SK-N-SH (cell line): ENCODE measurements at regions of chr10 and their contacts with region 1.

Region 1: DNA sequence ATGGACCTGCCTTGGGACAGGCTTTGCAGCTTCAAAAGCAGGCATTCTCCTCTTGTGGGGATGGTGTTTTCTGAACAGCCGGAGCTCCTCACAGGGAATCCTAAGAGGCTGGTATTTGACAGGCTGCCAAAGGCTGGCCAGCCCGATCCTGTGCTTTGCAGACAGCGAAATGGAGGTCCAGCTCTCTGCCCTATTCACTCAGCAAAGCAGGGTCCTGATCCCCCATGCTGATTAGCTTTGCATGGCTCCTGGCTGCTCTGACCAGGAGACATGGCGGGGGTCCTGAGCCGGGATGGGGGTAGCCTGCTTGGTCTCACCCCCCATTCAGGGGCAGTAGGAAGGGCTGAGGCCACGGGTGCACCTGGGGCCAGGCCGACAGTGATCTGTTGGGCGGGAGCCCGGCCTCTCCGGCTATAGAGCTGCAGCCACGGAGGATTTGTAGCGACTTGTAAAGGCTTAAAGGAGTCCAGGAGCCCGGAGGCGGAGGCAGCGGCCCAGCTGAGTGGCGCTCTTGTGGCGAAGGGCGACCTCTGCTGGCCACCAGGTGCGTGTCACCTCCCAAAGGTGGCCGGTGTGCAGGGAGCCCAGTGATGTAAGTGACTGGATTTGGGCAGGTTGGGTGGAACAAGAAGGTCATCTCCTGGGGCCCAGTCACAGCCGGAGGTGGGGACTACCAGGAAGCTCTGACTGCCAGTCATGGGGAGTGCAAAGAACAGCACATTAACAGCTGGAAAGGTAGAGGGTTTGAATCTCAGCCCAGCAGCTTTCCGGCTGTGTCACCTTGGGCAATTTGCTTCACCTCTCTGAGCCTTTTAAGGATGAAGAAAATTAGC is 126.5 kb downstream of the ZMIZ1 start:
- DNase-seq: peak; percentile 85
- H3K4me3 ChIP-seq: peak overlapping the region in 1 of 2 experiments; percentile 24; a peak in 1 of 4 replicates
- H3K27ac ChIP-seq: peak overlapping the region; percentile 70 to 93
- H3K4me1 ChIP-seq: peaks cover 25 to 72% of the 10 kb centered on the region in 2 experiments
- H3K27me3 ChIP-seq: no peaks in the 10 kb centered on the region
- CTCF ChIP-seq: peak; percentile 93
- EP300 ChIP-seq: no peak
- RAD21 ChIP-seq: peak; percentile 95

Region 2: DNA sequence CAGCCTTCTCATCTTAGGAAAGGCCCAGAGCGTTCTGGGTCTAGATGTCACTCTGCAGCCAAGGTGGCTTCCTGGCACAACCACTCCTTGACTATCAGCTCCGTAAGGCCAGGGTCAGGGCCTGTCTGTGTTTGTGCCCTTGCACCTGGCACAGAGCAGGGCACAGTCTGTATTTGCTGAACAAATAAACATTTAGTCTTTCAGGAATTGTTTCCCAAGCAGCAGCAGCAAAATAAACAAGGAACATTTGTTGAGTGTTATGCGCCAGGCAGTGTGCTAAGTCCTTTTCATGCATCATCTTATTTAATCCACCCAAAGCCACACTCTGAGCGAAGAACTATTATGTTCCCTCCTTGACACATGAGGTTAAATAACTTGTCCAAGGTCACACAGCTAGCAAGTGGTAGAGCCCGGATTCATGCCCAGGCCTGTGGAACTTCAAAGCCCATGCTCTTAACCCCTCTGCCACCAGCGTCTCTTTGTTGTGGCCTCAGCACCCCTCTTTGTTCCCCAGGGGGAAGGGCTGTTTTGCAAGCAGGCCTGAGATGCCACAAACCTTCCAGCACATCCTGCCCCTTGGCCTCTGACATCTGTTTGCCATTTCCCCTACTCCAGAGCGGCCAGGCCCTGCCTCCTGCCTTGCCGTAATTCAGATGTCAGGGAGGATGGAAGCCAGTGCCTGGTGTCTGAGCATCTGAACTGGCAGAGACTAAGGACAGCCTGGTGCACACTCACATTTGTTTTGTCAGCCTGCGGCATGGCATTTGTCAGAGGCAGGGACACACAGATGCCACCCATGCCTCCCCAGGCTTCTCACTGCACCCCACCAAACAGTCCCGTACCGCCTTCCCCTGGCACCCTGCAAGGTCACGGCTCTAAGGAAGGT is 452.3 kb before region 1 on chr10:
- CTCF ChIA-PET with region 1: interaction called, 14 read pairs
- POLR2A ChIA-PET with region 1: interaction called, 5 read pairs
- DNase-seq: peak; percentile 84
- H3K4me3 ChIP-seq: no peak overlapping the region
- H3K27ac ChIP-seq: peak overlapping the region in 1 of 2 experiments; percentile 99; a peak in 2 of 4 replicates
- H3K4me1 ChIP-seq: peaks cover 0 to 85% of the 10 kb centered on the region in 2 experiments; a peak in 2 of 4 replicates
- H3K27me3 ChIP-seq: no peaks in the 10 kb centered on the region
- CTCF ChIP-seq: no peak
- EP300 ChIP-seq: peak; percentile 21 to 99; a peak in 3 of 4 replicates
- RAD21 ChIP-seq: peak; percentile 51

Region 3: GRCh38 chr10:79068562-79069324 is 126.6 kb before region 1 on chr10 and contains the start of gene ZMIZ1:
- CTCF ChIA-PET with region 1: interaction called, 129 read pairs
- POLR2A ChIA-PET with region 1: interaction called, 12 read pairs
- DNase-seq: peak; percentile 88
- H3K4me3 ChIP-seq: peak within 1 kb of the TSS; percentile 93 to 99
- H3K27ac ChIP-seq: peak within 1 kb of the TSS; percentile 88 to 97
- H3K4me1 ChIP-seq: peaks cover 9 to 43% of the 10 kb centered on the region in 2 experiments
- H3K27me3 ChIP-seq: no peaks in the 10 kb centered on the region
- CTCF ChIP-seq: 0 out of 2 replicates have a peak, but pooled peaks have one; percentile 1
- EP300 ChIP-seq: peak in 1 of 2 experiments; percentile 32; a peak in 1 of 4 replicates
- RAD21 ChIP-seq: peak; percentile 29
- polyA plus RNA-seq, gene ZMIZ1: 6.6 and 23.5 TPM in 2 replicates

Region 4: GRCh38 chr10:79116801-79117723 is 78.2 kb before region 1 on chr10:
- CTCF ChIA-PET with region 1: interaction called, 10 read pairs
- POLR2A ChIA-PET with region 1: no interaction called
- DNase-seq: no peak
- H3K4me3 ChIP-seq: no peak overlapping the region
- H3K27ac ChIP-seq: peak overlapping the region in 1 of 2 experiments; percentile 75; a peak in 1 of 4 replicates
- H3K4me1 ChIP-seq: peaks cover 30 to 72% of the 10 kb centered on the region in 2 experiments
- H3K27me3 ChIP-seq: no peaks in the 10 kb centered on the region
- CTCF ChIP-seq: no peak
- EP300 ChIP-seq: peak in 1 of 2 experiments; percentile 51; a peak in 1 of 4 replicates
- RAD21 ChIP-seq: no peak

Region 5: DNA sequence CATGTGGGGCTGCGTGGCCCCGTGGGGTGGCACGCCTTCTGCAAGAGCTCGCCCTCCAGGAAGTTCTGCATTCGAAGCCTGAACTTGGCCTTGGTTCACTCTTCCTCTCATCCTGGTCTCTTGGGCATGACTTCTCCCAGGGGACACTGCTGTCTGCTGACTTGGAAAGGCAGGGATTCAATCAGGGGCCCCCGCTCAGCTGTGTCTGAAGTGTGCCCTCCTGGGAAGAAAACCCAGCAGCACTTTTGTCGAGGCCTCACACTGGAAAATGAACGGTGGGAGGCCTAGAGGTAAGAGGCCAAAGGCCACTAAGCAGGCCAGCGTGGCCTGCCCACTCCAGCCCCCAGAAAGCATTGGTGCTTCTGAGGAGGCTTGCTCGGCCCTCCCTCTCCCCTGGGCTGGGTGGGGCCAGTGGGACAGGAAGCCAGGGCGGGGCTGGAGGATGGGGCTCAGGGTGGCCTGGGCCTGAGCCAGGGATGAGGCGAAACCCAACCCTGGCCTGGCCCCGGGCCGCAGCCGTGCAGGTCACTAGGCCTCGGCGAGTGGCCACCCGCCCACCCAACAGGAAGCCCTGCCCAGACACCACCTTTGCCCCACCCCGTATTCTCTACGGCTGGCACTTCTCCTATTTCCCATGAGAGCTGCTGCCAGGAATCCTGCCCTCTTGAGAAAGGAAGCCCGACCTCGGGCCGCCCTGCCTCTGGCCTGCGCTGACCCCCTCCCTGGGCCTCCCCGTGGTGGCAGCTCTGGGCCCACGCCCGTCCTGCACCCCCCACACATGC is 45.5 kb before region 1 on chr10:
- CTCF ChIA-PET with region 1: interaction called, 91 read pairs
- POLR2A ChIA-PET with region 1: no interaction called
- DNase-seq: peak; percentile 63
- H3K4me3 ChIP-seq: no peak overlapping the region
- H3K27ac ChIP-seq: peak overlapping the region; percentile 82 to 97
- H3K4me1 ChIP-seq: peaks cover 51 to 95% of the 10 kb centered on the region in 2 experiments; a peak in 3 of 4 replicates
- H3K27me3 ChIP-seq: no peaks in the 10 kb centered on the region
- CTCF ChIP-seq: no peak
- EP300 ChIP-seq: peak in 1 of 2 experiments; percentile 34; a peak in 1 of 4 replicates
- RAD21 ChIP-seq: no peak

Region 6: GRCh38 chr10:79178614-79179163 is 16.6 kb before region 1 on chr10:
- CTCF ChIA-PET with region 1: interaction called, 136 read pairs
- POLR2A ChIA-PET with region 1: interaction called, 3 read pairs
- DNase-seq: peak; percentile 90
- H3K4me3 ChIP-seq: no peak overlapping the region
- H3K27ac ChIP-seq: peak overlapping the region; percentile 81 to 100
- H3K4me1 ChIP-seq: peaks cover 62 to 98% of the 10 kb centered on the region in 2 experiments
- H3K27me3 ChIP-seq: no peaks in the 10 kb centered on the region
- CTCF ChIP-seq: no peak
- EP300 ChIP-seq: peak in 1 of 2 experiments; percentile 94; a peak in 2 of 4 replicates
- RAD21 ChIP-seq: peak; percentile 47